Activated CD4-positive, alpha-beta T cell treated with anti-CD3 and anti-CD28 coated beads for 36 hours (primary cell): ENCODE measurements at regions of chr6 and their contacts with region 1.

Region 1: GRCh38 chr6:70310063-70310694 is 7.3 kb upstream of the COL9A1 start:
- DNase-seq: no peak
- ATAC-seq: no peak
- H3K4me3 Mint-ChIP-seq: no peak overlapping the region
- H3K27ac Mint-ChIP-seq: no peak overlapping the region
- H3K4me1 Mint-ChIP-seq: peaks cover 5% of the 10 kb centered on the region
- H3K27me3 Mint-ChIP-seq: peaks cover 23% of the 10 kb centered on the region

Region 2: DNA sequence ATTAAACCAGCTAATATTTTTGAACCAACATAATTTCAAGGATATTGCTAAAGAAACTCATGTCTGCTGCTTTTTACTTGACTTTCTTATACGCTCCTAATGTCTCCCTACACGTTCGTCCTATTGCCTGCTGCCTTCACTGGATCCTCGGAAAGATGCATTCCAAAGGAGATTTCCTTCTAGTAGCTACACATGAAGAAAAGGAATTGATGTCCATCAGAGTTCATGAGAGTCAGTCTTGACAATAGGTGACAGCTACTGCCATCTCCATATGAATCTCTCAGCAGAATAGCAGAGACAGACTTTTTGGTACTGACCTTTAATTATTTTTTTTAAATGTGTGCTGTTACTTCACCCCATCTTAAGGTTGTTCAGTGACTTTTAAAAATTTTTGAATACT is 16.9 kb after region 1 on chr6:
- CTCF ChIA-PET with region 1: interaction called, 15 read pairs
- POLR2A ChIA-PET with region 1: no interaction called
- intact Hi-C with region 1: no loop called
- DNase-seq: no peak
- ATAC-seq: no peak
- H3K4me3 Mint-ChIP-seq: no peak overlapping the region
- H3K27ac Mint-ChIP-seq: no peak overlapping the region
- H3K4me1 Mint-ChIP-seq: no peaks in the 10 kb centered on the region
- H3K27me3 Mint-ChIP-seq: peaks cover 3% of the 10 kb centered on the region

Region 3: DNA sequence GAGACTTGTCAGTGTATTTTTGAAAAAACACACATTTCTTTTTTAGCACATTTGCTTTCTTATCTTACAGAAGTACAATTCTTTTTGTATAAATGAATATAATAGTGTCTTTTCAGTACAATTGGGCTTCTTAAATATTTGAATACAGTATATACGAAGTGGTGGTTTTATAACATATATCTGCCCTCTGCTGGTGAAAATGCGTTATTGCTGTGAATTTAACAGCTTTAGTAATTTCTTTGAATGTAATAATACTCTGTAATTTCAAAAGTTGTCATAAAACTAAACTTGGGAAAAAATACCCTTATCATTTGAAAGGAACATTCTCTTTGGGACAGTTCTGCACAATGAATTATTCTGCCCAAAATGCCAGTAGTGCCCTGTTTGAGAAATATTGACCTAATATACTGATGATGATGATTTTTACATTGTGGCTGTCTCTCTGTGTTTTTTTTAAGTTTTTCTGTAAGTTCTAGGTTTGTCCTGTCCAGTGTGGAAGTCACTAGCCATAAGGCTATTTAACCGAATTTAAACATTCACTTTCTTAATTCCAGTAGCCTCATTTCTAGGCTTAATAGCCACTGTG is 376.5 kb after region 1 on chr6:
- CTCF ChIA-PET with region 1: interaction called, 26 read pairs
- POLR2A ChIA-PET with region 1: no interaction called
- intact Hi-C with region 1: loop called (anchors 2 to 5 kb)
- DNase-seq: no peak
- ATAC-seq: no peak
- H3K4me3 Mint-ChIP-seq: no peak overlapping the region
- H3K27ac Mint-ChIP-seq: no peak overlapping the region
- H3K4me1 Mint-ChIP-seq: peaks cover 38% of the 10 kb centered on the region
- H3K27me3 Mint-ChIP-seq: no peaks in the 10 kb centered on the region

Region 4: DNA sequence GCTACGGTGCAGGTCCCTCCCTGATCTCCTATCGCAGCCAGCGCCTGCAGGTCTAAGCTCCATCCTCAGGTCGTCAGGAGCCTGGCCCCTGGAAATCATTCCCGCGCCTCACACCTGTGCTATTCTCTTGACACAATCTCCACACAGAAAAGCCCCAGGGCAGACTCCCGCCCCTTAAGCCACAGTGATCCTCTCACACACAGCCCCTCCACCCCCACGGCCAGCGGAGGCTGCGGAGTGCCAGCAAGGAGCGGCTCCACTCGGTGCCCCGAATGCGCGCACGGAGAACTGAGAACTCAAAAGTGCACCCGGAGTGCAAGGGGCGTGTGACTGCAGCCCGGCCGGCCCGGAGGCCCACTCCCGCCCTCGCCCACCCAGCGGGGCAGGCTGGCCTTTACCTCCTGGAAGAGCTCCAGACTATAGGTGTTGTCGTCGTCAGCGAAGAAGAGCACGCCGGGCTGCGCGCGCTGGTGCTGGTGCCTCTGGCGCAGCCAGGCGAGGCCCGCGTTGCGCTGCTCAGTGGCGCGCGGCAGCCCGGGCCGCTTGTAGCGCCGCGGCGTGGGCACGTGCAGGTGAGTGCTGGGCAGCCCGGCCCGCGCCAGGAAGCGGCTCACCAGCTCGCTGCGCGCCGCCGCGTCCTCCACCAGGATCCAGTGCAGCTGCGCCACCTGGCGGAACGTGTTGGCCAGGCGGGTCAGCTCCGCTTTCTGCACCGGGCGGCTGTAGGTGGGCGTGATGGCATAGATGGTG is 645.4 kb after region 1 on chr6:
- CTCF ChIA-PET with region 1: interaction called, 10 read pairs
- POLR2A ChIA-PET with region 1: no interaction called
- intact Hi-C with region 1: loop called in 1 of 2 experiments (anchors 2 kb)
- DNase-seq: peak; percentile 94
- ATAC-seq: peak; percentile 95
- H3K4me3 Mint-ChIP-seq: peak overlapping the region; percentile 64
- H3K27ac Mint-ChIP-seq: no peak overlapping the region
- H3K4me1 Mint-ChIP-seq: peaks cover 14% of the 10 kb centered on the region
- H3K27me3 Mint-ChIP-seq: peaks cover 52% of the 10 kb centered on the region